Dorsolateral prefrontal cortex (tissue), 120 donors: ENCODE measurements at regions of chr13 and their contacts with region 1.

Region 1: DNA sequence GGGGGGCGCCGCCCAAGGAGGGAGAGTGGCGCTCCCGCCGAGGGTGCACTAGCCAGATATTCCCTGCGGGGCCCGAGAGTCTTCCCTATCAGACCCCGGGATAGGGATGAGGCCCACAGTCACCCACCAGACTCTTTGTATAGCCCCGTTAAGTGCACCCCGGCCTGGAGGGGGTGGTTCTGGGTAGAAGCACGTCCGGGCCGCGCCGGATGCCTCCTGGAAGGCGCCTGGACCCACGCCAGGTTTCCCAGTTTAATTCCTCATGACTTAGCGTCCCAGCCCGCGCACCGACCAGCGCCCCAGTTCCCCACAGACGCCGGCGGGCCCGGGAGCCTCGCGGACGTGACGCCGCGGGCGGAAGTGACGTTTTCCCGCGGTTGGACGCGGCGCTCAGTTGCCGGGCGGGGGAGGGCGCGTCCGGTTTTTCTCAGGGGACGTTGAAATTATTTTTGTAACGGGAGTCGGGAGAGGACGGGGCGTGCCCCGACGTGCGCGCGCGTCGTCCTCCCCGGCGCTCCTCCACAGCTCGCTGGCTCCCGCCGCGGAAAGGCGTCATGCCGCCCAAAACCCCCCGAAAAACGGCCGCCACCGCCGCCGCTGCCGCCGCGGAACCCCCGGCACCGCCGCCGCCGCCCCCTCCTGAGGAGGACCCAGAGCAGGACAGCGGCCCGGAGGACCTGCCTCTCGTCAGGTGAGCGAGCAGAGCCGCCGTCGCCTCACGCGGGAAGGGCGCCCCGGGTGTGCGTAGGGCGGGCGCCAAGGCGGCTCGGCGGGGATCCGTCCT is at the start of gene RB1:
- DNase-seq: peak; percentile 72 to 93 (median 85)
- H3K4me3 ChIP-seq: peak within 1 kb of the TSS; percentile 59 to 100 (median 96)
- H3K27ac ChIP-seq: peak within 1 kb of the TSS; percentile 77 to 99 (median 96)
- H3K27me3 ChIP-seq: no peaks in the 10 kb centered on the region
- CTCF ChIP-seq: peak in 11 of 56 donors; percentile 4 to 36 (median 16)
- total RNA-seq, gene RB1: 21.5 to 51.3 (median 33.9) TPM

Region 2: GRCh38 chr13:48037346-48038173 is 266.0 kb before region 1 on chr13 and contains the start of gene NUDT15:
- intact Hi-C with region 1: loop called in 1 of 2 experiments (anchors 5 kb)
- DNase-seq: peak; percentile 83 to 96 (median 93)
- H3K4me3 ChIP-seq: peak within 1 kb of the TSS; percentile 64 to 97 (median 81)
- H3K27ac ChIP-seq: peak within 1 kb of the TSS; percentile 89 to 100 (median 98)
- H3K27me3 ChIP-seq: no peaks in the 10 kb centered on the region
- CTCF ChIP-seq: peak; percentile 74 to 98 (median 92)
- total RNA-seq, gene NUDT15: 4.3 to 11.9 (median 6.7) TPM

Region 3: DNA sequence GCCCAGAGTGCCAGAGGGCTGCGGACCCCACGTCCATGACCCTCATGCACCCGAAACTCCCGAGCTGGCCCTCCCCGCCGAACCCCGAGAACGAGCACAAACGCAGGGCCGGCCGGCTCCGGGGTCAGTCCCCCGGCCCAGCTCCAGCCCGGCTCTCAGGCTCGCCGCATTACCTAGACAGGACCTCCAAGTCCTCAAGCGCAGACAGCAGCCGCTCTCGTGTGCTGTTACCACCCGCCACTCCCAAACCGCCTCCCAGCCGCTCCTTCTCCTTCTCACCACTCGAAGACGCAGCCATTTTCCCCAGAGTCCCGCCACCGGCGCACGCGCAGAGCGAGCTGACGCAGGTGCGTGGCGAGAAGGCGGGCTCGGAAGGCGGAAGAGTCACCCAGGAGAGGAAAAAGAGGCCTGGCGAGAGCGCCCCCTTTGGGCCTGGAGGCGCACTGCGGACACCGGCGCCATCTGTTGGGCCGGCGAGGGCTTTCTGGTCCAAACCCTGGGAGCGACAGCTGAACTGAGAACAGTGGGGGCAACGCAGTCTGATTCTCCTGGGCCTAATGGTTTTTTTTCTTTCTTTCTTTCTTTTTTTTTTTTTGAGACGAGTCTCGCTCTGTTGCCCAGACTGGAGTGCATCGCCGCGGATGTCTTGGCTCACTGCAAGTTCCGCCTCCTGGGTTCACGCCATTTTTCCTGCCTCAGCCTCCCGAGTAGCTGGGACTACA is 208.6 kb before region 1 on chr13 and contains the start of gene MED4:
- intact Hi-C with region 1: loop called (anchors 5 to 10 kb)
- DNase-seq: peak; percentile 88 to 98 (median 92)
- H3K4me3 ChIP-seq: peak within 1 kb of the TSS; percentile 57 to 100 (median 97)
- H3K27ac ChIP-seq: peak within 1 kb of the TSS in 57 of 59 donors; percentile 5 to 96 (median 80)
- H3K27me3 ChIP-seq: no peaks in the 10 kb centered on the region
- CTCF ChIP-seq: peak in 55 of 56 donors; percentile 99 to 100 (median 100)
- total RNA-seq, gene MED4: 25.6 to 57.8 (median 42.3) TPM

Region 4: GRCh38 chr13:48126944-48127830 is 176.4 kb before region 1 on chr13:
- intact Hi-C with region 1: loop called (anchors 10 kb)
- DNase-seq: peak in 2 of 10 donors; percentile 31 to 80
- H3K4me3 ChIP-seq: peak overlapping the region in 16 of 59 donors; percentile 0 to 39 (median 14)
- H3K27ac ChIP-seq: peak overlapping the region in 53 of 59 donors; percentile 1 to 89 (median 69)
- H3K27me3 ChIP-seq: no peaks in the 10 kb centered on the region
- CTCF ChIP-seq: peak; percentile 66 to 98 (median 84)

Region 5: GRCh38 chr13:48233046-48233907 is 70.3 kb before region 1 on chr13 and contains the start of gene ITM2B:
- intact Hi-C with region 1: loop called (anchors 2 to 5 kb)
- DNase-seq: peak; percentile 56 to 86 (median 76)
- H3K4me3 ChIP-seq: peak within 1 kb of the TSS; percentile 61 to 100 (median 94)
- H3K27ac ChIP-seq: peak within 1 kb of the TSS; percentile 90 to 100 (median 99)
- H3K27me3 ChIP-seq: no peaks in the 10 kb centered on the region
- CTCF ChIP-seq: peak in 45 of 56 donors; percentile 10 to 69 (median 44)
- total RNA-seq, gene ITM2B: 414 to 659 (median 555) TPM